Transverse colon (tissue), 4 donors: ENCODE measurements at regions of chr20 and their contacts with region 1.

Region 1: DNA sequence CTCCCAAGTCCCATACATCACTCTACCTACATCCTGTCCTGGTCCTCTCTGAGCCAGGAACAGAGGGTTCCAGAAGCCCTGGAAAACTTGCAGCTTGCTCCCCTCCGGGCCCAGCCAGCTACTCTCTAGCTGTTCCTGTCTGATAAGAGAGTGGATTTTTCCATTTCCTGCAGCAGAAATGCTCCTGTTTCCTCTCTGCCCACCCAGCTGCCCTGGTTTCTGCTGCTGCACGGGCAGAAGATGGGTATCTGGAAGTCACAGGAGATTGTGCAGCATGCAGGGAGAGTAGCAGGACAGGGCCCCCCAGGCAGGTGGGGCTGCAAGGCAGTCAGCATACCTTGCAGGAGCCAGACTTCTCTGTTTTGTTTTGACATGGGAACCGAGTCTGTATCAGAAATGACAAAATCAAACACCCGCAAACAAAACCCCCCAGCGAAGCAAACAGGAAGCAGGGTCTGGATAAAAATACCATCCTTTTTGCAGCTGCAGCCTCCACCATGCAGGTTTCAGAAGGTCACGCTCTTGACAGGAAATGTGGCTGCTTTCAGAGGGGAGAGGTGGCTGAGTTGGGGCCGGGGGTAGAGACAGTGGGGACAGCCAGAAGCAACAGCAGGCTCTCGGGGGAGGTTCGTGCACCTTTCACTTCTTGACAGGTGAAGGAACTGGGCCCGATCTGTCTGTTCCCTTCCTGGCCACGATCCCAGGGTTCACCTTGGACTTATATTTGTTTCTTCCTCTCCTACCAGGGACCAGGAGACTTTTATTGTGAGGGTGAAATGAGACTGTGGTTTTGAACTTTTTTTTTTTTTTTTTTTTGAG is 50.8 kb upstream of the FAM83D start:
- DNase-seq: peak; percentile 76
- H3K4me3 ChIP-seq: no peak overlapping the region
- H3K27ac ChIP-seq: peak overlapping the region; percentile 76 to 84 (median 78)
- H3K4me1 ChIP-seq: peaks cover 19 to 46% (median 38%) of the 10 kb centered on the region in 4 donors
- H3K27me3 ChIP-seq: peaks cover 10% of the 10 kb centered on the region
- CTCF ChIP-seq: no peak
- EP300 ChIP-seq: no peak
- POLR2A ChIP-seq: peak; percentile 15

Region 2: DNA sequence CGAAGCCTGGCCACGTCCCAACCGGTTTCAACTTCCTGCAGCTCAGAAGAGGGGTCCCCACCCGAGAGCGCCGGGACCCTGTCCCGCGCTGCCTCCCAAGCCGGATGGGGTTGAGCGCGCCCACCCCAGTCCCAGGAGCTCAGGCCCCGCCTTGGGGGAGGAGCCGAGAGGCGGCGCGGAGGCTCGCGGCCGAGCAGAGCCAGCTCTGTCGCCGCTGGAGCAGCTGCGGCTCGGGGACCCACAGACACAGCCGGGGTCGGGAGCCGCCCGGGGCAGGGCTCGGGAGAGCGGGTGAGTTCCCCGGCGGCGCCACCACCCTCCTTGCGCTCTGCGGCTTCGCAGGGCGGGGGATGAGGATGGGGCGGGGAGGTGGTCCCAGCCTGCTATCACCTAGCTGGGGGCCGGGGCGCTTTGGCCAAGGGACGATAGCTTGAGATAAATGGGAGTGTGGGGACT is 69.9 kb before region 1 on chr20 and contains the start of gene PPP1R16B:
- in situ Hi-C with region 1: loop called in 1 of 4 experiments (anchors 10 kb)
- intact Hi-C with region 1: no loop called
- DNase-seq: peak; percentile 70
- H3K4me3 ChIP-seq: peak within 1 kb of the TSS; percentile 27 to 72 (median 36)
- H3K27ac ChIP-seq: peak within 1 kb of the TSS; percentile 74 to 82 (median 80)
- H3K4me1 ChIP-seq: peaks cover 4 to 24% (median 17%) of the 10 kb centered on the region in 4 donors
- H3K27me3 ChIP-seq: peaks cover 58% of the 10 kb centered on the region
- CTCF ChIP-seq: no peak
- EP300 ChIP-seq: no peak
- POLR2A ChIP-seq: peak; percentile 50
- total RNA-seq, gene PPP1R16B: 1.8 to 11.1 (median 7.0) TPM